Endothelial cell of umbilical vein (primary cell): ENCODE measurements at regions of chr7 and their contacts with region 1.

Region 1: GRCh38 chr7:149497456-149498261 is at the start of gene ZNF746:
- DNase-seq: peak; percentile 56
- H3K4me3 ChIP-seq: peak within 1 kb of the TSS; percentile 72 to 90 (median 77)
- H3K27ac ChIP-seq: peak within 1 kb of the TSS; percentile 49
- H3K4me1 ChIP-seq: peaks cover 11% of the 10 kb centered on the region
- H3K27me3 ChIP-seq: peaks cover 5 to 15% of the 10 kb centered on the region in 2 experiments
- CTCF ChIP-seq: peak; percentile 53 to 73
- POLR2A ChIP-seq: peak; percentile 65
- total RNA-seq, gene ZNF746: 20.8 and 22.3 TPM in 2 replicates

Region 2: DNA sequence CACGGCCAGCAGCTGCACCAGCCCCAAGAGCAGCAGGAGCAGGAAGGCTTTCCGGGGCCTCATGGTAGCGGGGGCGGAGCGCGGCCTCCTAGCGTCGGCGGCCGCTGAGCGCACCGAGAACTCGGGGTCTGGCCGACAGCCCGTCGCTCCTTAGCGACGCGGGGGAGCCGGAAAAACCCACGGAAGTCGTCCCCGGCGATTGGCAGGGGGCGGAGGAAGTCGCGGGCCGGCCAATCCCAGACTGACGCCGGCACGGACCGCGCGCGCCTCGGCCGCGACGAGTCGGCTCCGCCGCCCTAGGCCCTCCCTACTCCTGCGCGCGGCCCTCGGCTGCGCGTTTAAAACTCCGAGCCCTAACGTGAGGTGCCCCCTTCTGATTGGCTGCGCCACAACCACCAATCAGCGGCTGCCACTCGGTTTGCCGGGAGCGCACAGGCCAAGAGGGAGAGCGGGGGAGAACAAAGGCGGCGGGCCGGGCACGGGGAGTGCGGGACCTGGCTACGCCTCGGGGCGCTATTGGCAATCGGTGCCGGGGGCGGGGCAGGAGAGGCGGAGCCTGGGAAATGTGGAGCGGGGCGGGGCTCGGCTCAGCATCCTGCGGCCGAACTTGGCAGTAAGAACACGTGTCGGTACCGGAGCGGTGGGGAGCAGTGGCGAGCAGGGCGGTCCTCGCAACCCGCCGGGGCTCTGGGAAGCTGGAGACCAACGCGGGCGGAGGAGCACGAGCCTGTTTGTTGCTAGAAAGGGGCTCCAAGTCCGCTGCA is 469.1 kb before region 1 on chr7 and contains the start of gene PDIA4:
- CTCF ChIA-PET with region 1: no interaction called
- POLR2A ChIA-PET with region 1: no interaction called
- dilution Hi-C with region 1: no loop called
- intact Hi-C with region 1: loop called (anchors 10 kb)
- DNase-seq: peak; percentile 100
- H3K4me3 ChIP-seq: peak within 1 kb of the TSS; percentile 80 to 91 (median 90)
- H3K27ac ChIP-seq: peak within 1 kb of the TSS; percentile 56
- H3K4me1 ChIP-seq: peaks cover 12% of the 10 kb centered on the region
- H3K27me3 ChIP-seq: no peaks in the 10 kb centered on the region
- CTCF ChIP-seq: peak in 1 of 2 donors; percentile 50
- POLR2A ChIP-seq: peak; percentile 73
- total RNA-seq, gene PDIA4: 306 and 308 TPM in 2 replicates

Region 3: DNA sequence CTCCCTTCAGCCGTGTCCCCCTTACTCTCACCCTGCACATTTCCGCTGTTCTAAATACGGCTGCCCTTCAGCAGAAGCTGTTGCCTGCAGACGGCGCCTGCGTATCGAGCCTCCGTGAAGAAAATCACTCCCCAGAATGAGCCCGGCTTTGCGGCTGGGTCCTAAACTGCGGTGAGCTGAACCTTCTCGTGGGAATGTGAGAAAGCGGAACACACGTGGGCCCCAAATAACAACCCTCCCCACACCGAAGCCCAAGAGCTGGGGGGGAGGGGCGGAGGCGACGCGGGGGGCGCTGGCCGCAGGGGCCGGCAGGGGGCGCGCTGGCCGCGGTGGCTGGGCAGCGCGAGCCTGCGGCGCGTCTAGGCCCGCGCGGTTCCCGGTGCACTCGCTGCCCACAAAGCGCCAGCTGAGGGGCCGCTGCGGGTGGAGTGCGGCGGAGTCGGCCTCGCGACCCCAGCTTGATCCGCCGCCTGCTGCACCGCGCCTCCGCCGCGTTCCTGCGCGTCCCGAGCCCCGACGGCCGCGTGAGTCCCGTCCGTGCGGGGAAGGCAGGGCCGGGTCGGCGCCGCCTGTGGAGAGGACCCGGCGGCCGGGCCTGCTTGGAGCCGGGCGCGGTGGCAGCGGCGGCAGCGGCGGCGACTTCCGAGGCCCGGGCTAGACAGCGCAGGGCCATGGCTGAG is 350.4 kb before region 1 on chr7 and contains the start of gene ZNF398:
- CTCF ChIA-PET with region 1: interaction called, 6 read pairs
- POLR2A ChIA-PET with region 1: no interaction called
- dilution Hi-C with region 1: no loop called
- intact Hi-C with region 1: loop called (anchors 5 kb)
- DNase-seq: peak; percentile 75
- H3K4me3 ChIP-seq: peak within 1 kb of the TSS; percentile 74 to 98 (median 87)
- H3K27ac ChIP-seq: peak within 1 kb of the TSS; percentile 57
- H3K4me1 ChIP-seq: peaks cover 4% of the 10 kb centered on the region
- H3K27me3 ChIP-seq: no peaks in the 10 kb centered on the region
- CTCF ChIP-seq: peak; percentile 42 to 79
- POLR2A ChIP-seq: peak; percentile 63
- total RNA-seq, gene ZNF398: 8.6 and 10.6 TPM in 2 replicates

Region 4: GRCh38 chr7:149209518-149210269 is 288.0 kb before region 1 on chr7:
- CTCF ChIA-PET with region 1: no interaction called
- POLR2A ChIA-PET with region 1: no interaction called
- dilution Hi-C with region 1: no loop called
- intact Hi-C with region 1: loop called (anchors 1 kb)
- DNase-seq: peak; percentile 59
- H3K4me3 ChIP-seq: no peak overlapping the region
- H3K27ac ChIP-seq: peak overlapping the region; percentile 28
- H3K4me1 ChIP-seq: peaks cover 4% of the 10 kb centered on the region
- H3K27me3 ChIP-seq: no peaks in the 10 kb centered on the region
- CTCF ChIP-seq: peak; percentile 73 to 82
- POLR2A ChIP-seq: no peak

Region 5: DNA sequence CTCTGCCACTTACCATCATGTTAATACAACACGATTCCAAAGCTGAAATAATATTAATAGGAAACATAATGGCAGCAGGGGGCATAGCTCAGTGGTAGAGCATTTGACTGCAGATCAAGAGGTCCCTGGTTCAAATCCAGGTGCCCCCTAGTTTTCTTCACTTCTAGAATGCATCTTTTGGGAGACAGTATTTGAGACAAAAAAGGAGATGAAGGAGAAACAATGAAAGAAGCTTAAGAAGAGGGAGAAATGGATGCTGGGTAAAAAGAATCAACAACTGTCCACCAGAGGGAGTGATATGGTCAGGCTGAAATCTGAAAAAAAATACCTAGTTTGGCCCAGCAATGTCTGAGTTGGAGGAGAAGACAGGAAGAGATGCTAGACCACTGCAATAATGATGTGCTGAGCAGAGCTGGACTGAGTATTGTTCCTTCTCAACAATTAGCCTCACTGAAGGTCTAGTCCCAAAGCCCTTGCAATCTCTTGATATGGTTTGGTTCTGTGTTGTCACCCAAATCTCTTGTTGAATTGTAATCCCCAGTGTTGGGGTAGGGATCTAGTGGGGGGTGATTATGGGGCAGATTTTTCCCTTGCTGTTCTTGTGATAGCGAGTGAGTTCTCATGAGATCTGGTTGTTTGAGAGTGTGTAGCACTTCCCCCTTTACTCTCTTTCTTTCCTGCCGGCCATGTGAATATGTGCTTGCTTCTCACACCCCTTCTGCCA is 187.4 kb before region 1 on chr7:
- CTCF ChIA-PET with region 1: interaction called, 11 read pairs
- POLR2A ChIA-PET with region 1: no interaction called
- dilution Hi-C with region 1: no loop called
- intact Hi-C with region 1: loop called (anchors 1 kb)
- DNase-seq: peak; percentile 69
- H3K4me3 ChIP-seq: no peak overlapping the region
- H3K27ac ChIP-seq: no peak overlapping the region
- H3K4me1 ChIP-seq: no peaks in the 10 kb centered on the region
- H3K27me3 ChIP-seq: peaks cover 2 to 5% of the 10 kb centered on the region in 2 experiments
- CTCF ChIP-seq: peak; percentile 50 to 61
- POLR2A ChIP-seq: no peak

Region 6: GRCh38 chr7:149460493-149461277 is 37.0 kb before region 1 on chr7 and contains the start of gene ZNF777:
- CTCF ChIA-PET with region 1: no interaction called
- POLR2A ChIA-PET with region 1: no interaction called
- dilution Hi-C with region 1: no loop called
- intact Hi-C with region 1: loop called (anchors 1 kb)
- DNase-seq: peak; percentile 80
- H3K4me3 ChIP-seq: peak within 1 kb of the TSS; percentile 26 to 82 (median 60)
- H3K27ac ChIP-seq: peak within 1 kb of the TSS; percentile 8
- H3K4me1 ChIP-seq: peaks cover 9% of the 10 kb centered on the region
- H3K27me3 ChIP-seq: no peaks in the 10 kb centered on the region
- CTCF ChIP-seq: peak; percentile 40 to 50
- POLR2A ChIP-seq: peak; percentile 77
- total RNA-seq, gene ZNF777: 11.1 and 12.2 TPM in 2 replicates